CD4-positive, alpha-beta memory T cell (primary cell): ENCODE measurements at regions of chr7 and their contacts with region 1.

Region 1: GRCh38 chr7:150753826-150754603 is 16.8 kb downstream of the GIMAP5 start:
- DNase-seq: peak in 1 of 5 donors; percentile 45
- H3K4me3 ChIP-seq: no peak overlapping the region
- H3K4me3 Mint-ChIP-seq: peak overlapping the region in 7 of 8 donors; percentile 8 to 76 (median 52)
- H3K27ac ChIP-seq: peak overlapping the region; percentile 37
- H3K27ac Mint-ChIP-seq: peak overlapping the region; percentile 90 to 97 (median 93)
- H3K4me1 ChIP-seq: peaks cover 80% of the 10 kb centered on the region
- H3K4me1 Mint-ChIP-seq: peaks cover 56 to 79% (median 68%) of the 10 kb centered on the region in 4 donors
- H3K27me3 ChIP-seq: no peaks in the 10 kb centered on the region
- H3K27me3 Mint-ChIP-seq: peaks cover 0 to 2% of the 10 kb centered on the region in 2 donors

Region 2: DNA sequence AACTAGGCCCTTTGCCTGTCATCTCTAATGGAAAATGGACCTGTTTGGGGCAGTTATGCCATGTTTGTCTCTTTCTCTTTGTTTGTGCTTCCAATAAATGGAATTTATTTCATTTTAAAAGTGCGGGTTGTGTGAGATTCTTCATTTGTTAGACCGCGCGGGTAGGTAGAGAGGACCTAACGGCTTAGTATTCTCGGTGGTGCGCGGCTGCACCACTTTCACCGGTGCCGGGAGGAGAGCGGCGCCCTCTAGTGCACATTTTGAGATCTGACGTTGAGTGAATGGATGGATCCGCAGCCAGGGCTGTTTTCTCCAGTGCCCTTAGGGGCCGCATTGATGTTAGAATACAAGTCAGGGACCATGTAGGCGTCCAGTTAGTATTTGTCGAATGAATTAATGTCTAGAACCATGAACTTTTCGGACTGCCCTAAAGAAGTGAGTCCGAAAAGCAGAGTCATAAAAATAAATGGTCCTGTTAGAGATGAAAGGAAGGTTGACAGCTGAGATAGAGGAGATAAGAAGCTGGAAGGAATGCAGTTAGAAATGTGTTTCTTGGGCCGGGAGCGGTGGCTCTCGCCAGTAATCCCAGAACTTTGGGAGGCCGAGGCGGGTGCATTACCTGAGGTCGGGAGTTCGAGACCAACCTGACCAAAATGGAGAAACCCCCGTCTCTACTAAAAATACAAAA is 332.9 kb before region 1 on chr7:
- CTCF ChIA-PET with region 1: interaction called, 3 read pairs
- POLR2A ChIA-PET with region 1: no interaction called
- intact Hi-C with region 1: loop called (anchors 1 kb)
- DNase-seq: peak; percentile 77 to 84 (median 81)
- H3K4me3 ChIP-seq: no peak overlapping the region
- H3K4me3 Mint-ChIP-seq: peak overlapping the region; percentile 9 to 71 (median 54)
- H3K27ac ChIP-seq: no peak overlapping the region
- H3K27ac Mint-ChIP-seq: peak overlapping the region in 5 of 7 donors; percentile 1 to 69 (median 10)
- H3K4me1 ChIP-seq: peaks cover 10% of the 10 kb centered on the region
- H3K4me1 Mint-ChIP-seq: peaks cover 5 to 8% (median 6%) of the 10 kb centered on the region in 4 donors
- H3K27me3 ChIP-seq: no peaks in the 10 kb centered on the region
- H3K27me3 Mint-ChIP-seq: no peaks in the 10 kb centered on the region

Region 3: DNA sequence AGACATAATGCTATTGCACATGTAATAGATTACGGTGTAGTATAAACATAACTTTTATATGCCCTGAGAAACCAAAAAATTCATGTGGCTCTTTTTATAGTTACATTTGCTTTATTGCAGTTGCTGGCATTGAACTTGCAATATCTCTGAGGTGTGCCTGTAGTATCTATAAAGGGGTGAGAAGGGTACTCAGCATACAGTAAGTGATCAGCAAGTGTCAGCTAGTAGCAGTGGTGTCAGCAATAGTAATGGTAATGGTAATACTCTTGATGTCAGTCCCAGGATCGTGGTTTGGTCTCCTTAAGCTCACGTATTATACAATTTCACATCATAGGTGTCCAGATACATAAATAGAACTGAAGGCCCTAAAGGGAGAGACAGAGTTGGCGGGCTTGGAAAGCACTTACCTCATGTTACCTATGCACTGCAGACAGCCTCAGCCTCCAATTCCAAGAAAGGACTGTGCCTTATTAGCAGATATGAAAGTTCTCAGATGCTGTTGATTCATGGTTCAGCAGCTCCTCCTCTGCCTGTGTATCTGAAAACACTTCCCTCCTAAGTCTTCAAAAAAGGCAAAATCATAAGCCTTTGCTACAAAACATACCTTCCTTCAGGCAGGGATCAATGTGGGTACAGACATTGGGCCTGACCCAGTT is 245.9 kb before region 1 on chr7:
- CTCF ChIA-PET with region 1: interaction called, 8 read pairs
- POLR2A ChIA-PET with region 1: interaction called, 31 read pairs
- intact Hi-C with region 1: no loop called
- DNase-seq: no peak
- H3K4me3 ChIP-seq: peak overlapping the region; percentile 4 to 28
- H3K4me3 Mint-ChIP-seq: peak overlapping the region; percentile 78 to 88 (median 85)
- H3K27ac ChIP-seq: peak overlapping the region; percentile 61
- H3K27ac Mint-ChIP-seq: peak overlapping the region; percentile 89 to 96 (median 93)
- H3K4me1 ChIP-seq: peaks cover 95% of the 10 kb centered on the region
- H3K4me1 Mint-ChIP-seq: peaks cover 78 to 97% (median 87%) of the 10 kb centered on the region in 4 donors
- H3K27me3 ChIP-seq: no peaks in the 10 kb centered on the region
- H3K27me3 Mint-ChIP-seq: no peaks in the 10 kb centered on the region

Region 4: GRCh38 chr7:150620617-150621371 is 133.2 kb before region 1 on chr7:
- CTCF ChIA-PET with region 1: interaction called, 4 read pairs
- POLR2A ChIA-PET with region 1: interaction called, 43 read pairs
- intact Hi-C with region 1: no loop called
- DNase-seq: no peak
- H3K4me3 ChIP-seq: no peak overlapping the region
- H3K4me3 Mint-ChIP-seq: peak overlapping the region; percentile 2 to 63 (median 44)
- H3K27ac ChIP-seq: no peak overlapping the region
- H3K27ac Mint-ChIP-seq: peak overlapping the region; percentile 70 to 92 (median 86)
- H3K4me1 ChIP-seq: peaks cover 41% of the 10 kb centered on the region
- H3K4me1 Mint-ChIP-seq: peaks cover 42 to 61% (median 54%) of the 10 kb centered on the region in 4 donors
- H3K27me3 ChIP-seq: no peaks in the 10 kb centered on the region
- H3K27me3 Mint-ChIP-seq: no peaks in the 10 kb centered on the region

Region 5: DNA sequence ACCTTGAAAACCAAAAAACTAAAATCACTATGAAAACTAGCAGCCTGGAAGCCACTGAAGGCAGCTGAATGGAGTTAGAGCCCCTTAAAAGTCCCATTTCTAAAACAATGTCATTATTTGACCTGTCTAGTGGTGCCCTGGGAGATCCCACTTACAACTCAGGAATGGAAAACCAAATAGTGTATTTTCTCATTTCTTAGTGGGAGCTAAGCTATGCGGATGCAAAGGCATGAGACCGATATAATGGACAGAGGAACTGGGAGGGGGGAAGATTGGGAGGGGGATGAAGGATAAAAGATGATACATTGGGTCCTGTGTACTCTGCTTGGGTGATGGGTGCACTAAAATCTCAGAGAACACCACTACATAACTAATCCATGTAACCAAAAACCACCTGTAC is 78.3 kb before region 1 on chr7:
- CTCF ChIA-PET with region 1: interaction called, 4 read pairs
- POLR2A ChIA-PET with region 1: interaction called, 149 read pairs
- intact Hi-C with region 1: loop called (anchors 2 kb)
- DNase-seq: no peak
- H3K4me3 ChIP-seq: no peak overlapping the region
- H3K4me3 Mint-ChIP-seq: peak overlapping the region; percentile 39 to 89 (median 61)
- H3K27ac ChIP-seq: peak overlapping the region; percentile 18
- H3K27ac Mint-ChIP-seq: peak overlapping the region; percentile 26 to 92 (median 86)
- H3K4me1 ChIP-seq: peaks cover 75% of the 10 kb centered on the region
- H3K4me1 Mint-ChIP-seq: peaks cover 55 to 87% (median 70%) of the 10 kb centered on the region in 4 donors
- H3K27me3 ChIP-seq: no peaks in the 10 kb centered on the region
- H3K27me3 Mint-ChIP-seq: no peaks in the 10 kb centered on the region

Region 6: GRCh38 chr7:150716368-150716767 is 37.6 kb before region 1 on chr7 and contains the start of gene GIMAP1:
- CTCF ChIA-PET with region 1: interaction called, 29 read pairs
- POLR2A ChIA-PET with region 1: interaction called, 593 read pairs
- intact Hi-C with region 1: loop called (anchors 1 kb)
- DNase-seq: peak; percentile 74 to 80 (median 79)
- H3K4me3 ChIP-seq: peak within 1 kb of the TSS; percentile 74 to 83
- H3K4me3 Mint-ChIP-seq: peak within 1 kb of the TSS; percentile 94 to 100 (median 98)
- H3K27ac ChIP-seq: peak within 1 kb of the TSS; percentile 74
- H3K27ac Mint-ChIP-seq: peak within 1 kb of the TSS; percentile 88 to 98 (median 97)
- H3K4me1 ChIP-seq: peaks cover 56% of the 10 kb centered on the region
- H3K4me1 Mint-ChIP-seq: peaks cover 48 to 79% (median 65%) of the 10 kb centered on the region in 4 donors
- H3K27me3 ChIP-seq: no peaks in the 10 kb centered on the region
- H3K27me3 Mint-ChIP-seq: no peaks in the 10 kb centered on the region
- total RNA-seq, gene GIMAP1: 93.7 to 97.6 TPM

Region 7: DNA sequence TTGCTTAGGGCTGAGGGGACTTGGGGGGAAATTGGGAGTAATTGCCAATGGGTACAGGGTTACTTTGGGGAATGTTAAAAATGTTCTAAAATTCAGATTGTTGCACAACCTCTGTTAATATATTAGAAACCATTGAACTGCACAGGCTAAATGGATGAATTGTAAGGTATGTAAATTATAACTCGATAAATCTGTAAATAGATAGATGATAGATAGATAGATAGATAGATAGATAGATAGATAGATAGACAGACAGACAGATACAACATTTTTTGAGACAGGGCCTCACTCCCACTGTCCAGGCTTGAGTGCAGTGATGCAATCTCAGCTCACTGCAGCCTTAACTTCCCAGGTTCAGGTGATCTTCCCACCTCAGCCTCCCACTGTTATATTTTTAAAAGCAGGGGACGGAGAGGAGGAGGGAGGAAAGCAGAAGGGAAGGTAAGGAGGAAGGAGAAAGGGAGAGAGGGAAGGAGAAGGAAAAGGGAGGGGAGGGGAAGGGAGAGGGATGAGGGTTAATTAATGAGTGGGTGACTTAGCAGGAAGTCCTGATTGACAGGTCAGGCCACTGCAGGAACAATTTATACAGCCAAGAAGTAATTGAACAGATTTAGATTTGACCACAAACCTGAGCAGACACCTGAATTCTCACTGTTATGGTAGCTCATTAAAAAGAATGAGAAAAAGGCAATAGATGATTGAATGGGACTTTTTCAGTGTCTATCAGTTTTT is 137.0 kb after region 1 on chr7:
- CTCF ChIA-PET with region 1: no interaction called
- POLR2A ChIA-PET with region 1: no interaction called
- intact Hi-C with region 1: no loop called
- DNase-seq: no peak
- H3K4me3 ChIP-seq: no peak overlapping the region
- H3K4me3 Mint-ChIP-seq: no peak overlapping the region
- H3K27ac ChIP-seq: no peak overlapping the region
- H3K27ac Mint-ChIP-seq: no peak overlapping the region
- H3K4me1 ChIP-seq: no peaks in the 10 kb centered on the region
- H3K4me1 Mint-ChIP-seq: no peaks in the 10 kb centered on the region
- H3K27me3 ChIP-seq: no peaks in the 10 kb centered on the region
- H3K27me3 Mint-ChIP-seq: peaks cover 5 to 8% of the 10 kb centered on the region in 2 donors